Activated B cell treated with CpG ODN at 0.5 μM for 24 hours (primary cell): ENCODE measurements at regions of chr9 and their contacts with region 1.

Region 1: GRCh38 chr9:69035438-69036308 is at the start of gene FXN:
- DNase-seq: peak; percentile 80
- ATAC-seq: peak; percentile 92
- H3K4me3 Mint-ChIP-seq: peak within 1 kb of the TSS; percentile 96
- H3K27ac Mint-ChIP-seq: peak within 1 kb of the TSS; percentile 85
- H3K4me1 Mint-ChIP-seq: peaks cover 14% of the 10 kb centered on the region
- H3K27me3 Mint-ChIP-seq: no peaks in the 10 kb centered on the region
- CTCF ChIP-seq: peak; percentile 83
- total RNA-seq, gene FXN: 12.7 and 17.7 TPM in 2 replicates

Region 2: GRCh38 chr9:68704814-68705530 is 330.7 kb before region 1 on chr9 and contains the start of gene PIP5K1B:
- CTCF ChIA-PET with region 1: no interaction called
- POLR2A ChIA-PET with region 1: no interaction called
- intact Hi-C with region 1: loop called (anchors 5 kb)
- DNase-seq: peak; percentile 76
- ATAC-seq: peak; percentile 85
- H3K4me3 Mint-ChIP-seq: peak within 1 kb of the TSS; percentile 97
- H3K27ac Mint-ChIP-seq: peak within 1 kb of the TSS; percentile 82
- H3K4me1 Mint-ChIP-seq: peaks cover 50% of the 10 kb centered on the region
- H3K27me3 Mint-ChIP-seq: no peaks in the 10 kb centered on the region
- CTCF ChIP-seq: no peak
- total RNA-seq, gene PIP5K1B: 17.1 and 22.0 TPM in 2 replicates

Region 3: GRCh38 chr9:68793605-68794343 is 241.9 kb before region 1 on chr9:
- CTCF ChIA-PET with region 1: no interaction called
- POLR2A ChIA-PET with region 1: no interaction called
- intact Hi-C with region 1: no loop called
- DNase-seq: no peak
- ATAC-seq: peak; percentile 84
- H3K4me3 Mint-ChIP-seq: no peak overlapping the region
- H3K27ac Mint-ChIP-seq: no peak overlapping the region
- H3K4me1 Mint-ChIP-seq: peaks cover 25% of the 10 kb centered on the region
- H3K27me3 Mint-ChIP-seq: no peaks in the 10 kb centered on the region
- CTCF ChIP-seq: no peak

Region 4: GRCh38 chr9:69121828-69122548 is 86.3 kb after region 1 on chr9:
- CTCF ChIA-PET with region 1: interaction called, 4 read pairs
- POLR2A ChIA-PET with region 1: no interaction called
- intact Hi-C with region 1: loop called (anchors 5 kb)
- DNase-seq: peak; percentile 45
- ATAC-seq: peak; percentile 74
- H3K4me3 Mint-ChIP-seq: peak overlapping the region; percentile 92
- H3K27ac Mint-ChIP-seq: peak overlapping the region; percentile 30
- H3K4me1 Mint-ChIP-seq: peaks cover 18% of the 10 kb centered on the region
- H3K27me3 Mint-ChIP-seq: no peaks in the 10 kb centered on the region
- CTCF ChIP-seq: no peak

Region 5: DNA sequence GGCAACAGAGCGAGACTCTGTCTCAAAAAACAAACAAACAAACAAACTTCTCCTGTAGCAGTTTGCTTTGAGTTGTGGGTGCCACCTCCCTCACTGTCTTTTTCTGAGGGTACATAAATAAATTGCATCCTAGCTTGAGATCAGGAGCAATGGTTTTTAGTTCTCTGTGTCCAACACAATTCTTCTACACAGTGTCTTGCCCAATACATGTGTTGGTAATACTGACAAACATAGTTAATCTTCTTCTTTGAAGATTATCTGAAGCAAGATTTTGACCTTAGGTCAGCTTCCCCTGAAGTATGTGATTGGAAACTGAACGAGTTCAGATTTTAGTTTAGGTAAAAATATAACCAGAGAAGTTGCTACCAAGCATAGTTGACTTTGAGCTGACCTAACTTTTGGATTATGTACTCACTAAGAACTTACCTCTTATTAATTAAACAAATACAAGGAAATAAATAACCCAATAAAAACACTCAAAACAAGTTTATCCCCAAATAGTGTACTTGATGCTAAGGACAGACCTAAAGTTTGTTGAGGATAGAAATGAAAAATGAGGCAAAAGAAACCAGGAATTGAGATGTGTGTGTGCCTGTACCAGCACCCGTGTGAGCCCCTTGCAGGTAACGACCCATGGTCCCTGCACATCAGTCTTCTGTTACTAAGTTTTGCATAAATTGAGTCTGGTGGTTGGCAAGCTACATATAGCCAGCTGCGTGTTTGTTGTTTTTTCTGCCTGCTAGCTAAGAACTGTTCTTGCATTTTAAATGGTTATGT is 154.6 kb after region 1 on chr9:
- CTCF ChIA-PET with region 1: interaction called, 12 read pairs
- POLR2A ChIA-PET with region 1: interaction called, 8 read pairs
- intact Hi-C with region 1: loop called (anchors 1 kb)
- DNase-seq: no peak
- ATAC-seq: no peak
- H3K4me3 Mint-ChIP-seq: no peak overlapping the region
- H3K27ac Mint-ChIP-seq: no peak overlapping the region
- H3K4me1 Mint-ChIP-seq: peaks cover 6% of the 10 kb centered on the region
- H3K27me3 Mint-ChIP-seq: no peaks in the 10 kb centered on the region
- CTCF ChIP-seq: no peak

Region 6: GRCh38 chr9:69759421-69760277 is 724.0 kb after region 1 on chr9 and contains the start of gene PTAR1:
- CTCF ChIA-PET with region 1: no interaction called
- POLR2A ChIA-PET with region 1: no interaction called
- intact Hi-C with region 1: loop called (anchors 1 kb)
- DNase-seq: peak; percentile 92
- ATAC-seq: peak; percentile 86
- H3K4me3 Mint-ChIP-seq: peak within 1 kb of the TSS; percentile 95
- H3K27ac Mint-ChIP-seq: peak within 1 kb of the TSS; percentile 94
- H3K4me1 Mint-ChIP-seq: peaks cover 25% of the 10 kb centered on the region
- H3K27me3 Mint-ChIP-seq: no peaks in the 10 kb centered on the region
- CTCF ChIP-seq: no peak
- total RNA-seq, gene PTAR1: 39.3 and 49.5 TPM in 2 replicates